CD4-positive, alpha-beta T cell (primary cell): ENCODE measurements at regions of chr11 and their contacts with region 1.

Region 1: GRCh38 chr11:90453525-90453924 is 230.7 kb upstream of the CHORDC1 start:
- DNase-seq: no peak
- ATAC-seq: no peak
- H3K4me3 ChIP-seq: no peak overlapping the region
- H3K4me3 Mint-ChIP-seq: no peak overlapping the region
- H3K27ac ChIP-seq: no peak overlapping the region
- H3K27ac Mint-ChIP-seq: no peak overlapping the region
- H3K4me1 ChIP-seq: no peaks in the 10 kb centered on the region
- H3K4me1 Mint-ChIP-seq: no peaks in the 10 kb centered on the region
- H3K27me3 ChIP-seq: no peaks in the 10 kb centered on the region
- H3K27me3 Mint-ChIP-seq: no peaks in the 10 kb centered on the region
- CTCF ChIP-seq: no peak

Region 2: DNA sequence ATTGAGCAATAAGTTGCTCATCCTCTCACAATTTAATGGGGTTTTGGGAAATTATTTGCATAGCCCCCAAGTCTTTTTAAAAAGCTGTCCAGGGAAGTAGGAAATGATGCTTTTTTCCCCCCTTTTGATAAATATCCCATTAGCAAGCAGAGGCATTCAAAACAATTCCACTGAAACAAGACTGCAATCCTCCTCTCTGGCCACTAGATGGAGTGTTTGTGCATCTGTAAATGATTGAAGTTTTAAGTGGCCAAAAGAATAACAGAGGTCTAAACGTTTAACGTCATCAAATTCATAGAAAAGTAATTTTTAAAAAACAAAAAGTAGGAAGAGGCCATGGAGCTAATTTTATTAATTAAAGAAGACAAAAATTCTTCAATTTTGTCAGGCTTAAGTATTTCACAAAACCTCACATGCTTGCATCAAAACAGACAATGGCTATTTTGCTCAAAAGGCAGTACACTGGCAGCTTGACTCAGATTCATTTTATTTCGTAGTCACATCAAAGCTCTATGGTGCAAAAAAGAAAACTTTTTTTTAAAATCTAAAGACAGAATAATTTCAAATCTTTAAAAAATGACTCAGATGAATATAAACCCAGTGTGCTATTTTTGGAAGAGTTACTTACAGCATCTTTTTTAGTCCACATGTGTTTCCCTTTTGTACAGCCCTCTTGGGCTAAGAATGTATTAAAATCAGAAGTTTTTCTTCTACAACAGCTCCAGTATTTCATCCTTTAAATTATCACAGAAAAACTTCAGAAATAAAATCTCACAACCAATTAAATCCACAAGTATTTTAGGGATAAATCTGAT is 248.5 kb before region 1 on chr11:
- CTCF ChIA-PET with region 1: no interaction called
- POLR2A ChIA-PET with region 1: no interaction called
- intact Hi-C with region 1: loop called (anchors 5 to 10 kb)
- DNase-seq: peak in 3 of 14 experiments; percentile 58 to 70 (median 69)
- ATAC-seq: peak; percentile 69
- H3K4me3 ChIP-seq: no peak overlapping the region
- H3K4me3 Mint-ChIP-seq: no peak overlapping the region
- H3K27ac ChIP-seq: no peak overlapping the region
- H3K27ac Mint-ChIP-seq: peak overlapping the region; percentile 45
- H3K4me1 ChIP-seq: no peaks in the 10 kb centered on the region
- H3K4me1 Mint-ChIP-seq: peaks cover 24% of the 10 kb centered on the region
- H3K27me3 ChIP-seq: no peaks in the 10 kb centered on the region
- H3K27me3 Mint-ChIP-seq: no peaks in the 10 kb centered on the region
- CTCF ChIP-seq: peak; percentile 96

Region 3: DNA sequence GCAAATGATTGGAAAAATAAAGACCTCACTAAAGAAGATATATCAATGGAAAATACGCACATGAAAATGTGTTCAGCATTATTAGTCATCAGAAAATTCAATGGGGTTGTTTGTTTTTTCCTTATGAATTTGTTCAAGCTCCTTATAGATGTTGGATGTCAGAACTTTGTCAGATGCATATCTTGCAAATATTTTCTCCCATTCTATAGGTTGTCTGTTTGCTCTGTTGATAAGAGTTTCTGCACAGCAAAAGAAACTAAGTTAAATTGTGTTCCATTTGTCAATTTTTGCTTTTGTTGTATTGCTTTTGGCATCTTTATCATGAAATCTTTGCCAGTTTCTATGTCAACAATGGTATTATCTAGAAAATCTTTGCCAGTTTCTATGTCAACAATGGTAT is 403.3 kb after region 1 on chr11:
- CTCF ChIA-PET with region 1: no interaction called
- POLR2A ChIA-PET with region 1: no interaction called
- intact Hi-C with region 1: no loop called
- DNase-seq: no peak
- ATAC-seq: no peak
- H3K4me3 ChIP-seq: no peak overlapping the region
- H3K4me3 Mint-ChIP-seq: no peak overlapping the region
- H3K27ac ChIP-seq: no peak overlapping the region
- H3K27ac Mint-ChIP-seq: no peak overlapping the region
- H3K4me1 ChIP-seq: no peaks in the 10 kb centered on the region
- H3K4me1 Mint-ChIP-seq: no peaks in the 10 kb centered on the region
- H3K27me3 ChIP-seq: no peaks in the 10 kb centered on the region
- H3K27me3 Mint-ChIP-seq: no peaks in the 10 kb centered on the region
- CTCF ChIP-seq: no peak